ENCODE measurements at regions of chr15 and their contacts with region 1.

Region 1: GRCh38 chr15:96170979-96171739 is 159.3 kb upstream of the NR2F2 start:
- DNase-seq: peak; percentile 69
- H3K4me3 Mint-ChIP-seq: no peak overlapping the region
- H3K27ac Mint-ChIP-seq: no peak overlapping the region
- H3K4me1 Mint-ChIP-seq: peaks cover 19% of the 10 kb centered on the region
- H3K27me3 Mint-ChIP-seq: no peaks in the 10 kb centered on the region
- CTCF ChIP-seq: no peak

Region 2: DNA sequence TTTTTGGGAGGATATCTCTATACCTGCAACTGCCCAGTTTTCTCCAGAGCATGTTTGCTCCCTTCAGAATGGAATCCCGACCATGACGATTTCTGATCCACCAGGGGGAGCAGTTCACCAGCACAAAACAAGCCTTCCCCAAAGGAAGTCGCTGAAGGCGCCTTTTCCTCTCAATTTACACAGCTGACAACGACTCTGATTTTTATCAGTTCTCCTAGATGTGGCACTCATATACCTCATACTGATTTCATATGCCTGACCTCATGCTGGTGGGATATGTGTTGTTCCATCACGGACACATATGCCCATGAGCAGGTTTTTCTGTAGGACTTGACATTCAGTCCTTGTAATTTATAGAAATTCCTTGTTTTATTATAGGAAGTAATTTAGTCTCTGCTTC is 911.6 kb before region 1 on chr15:
- CTCF ChIA-PET with region 1: no interaction called
- intact Hi-C with region 1: loop called (anchors 10 kb)
- DNase-seq: peak; percentile 78
- H3K4me3 Mint-ChIP-seq: peak overlapping the region; percentile 15
- H3K27ac Mint-ChIP-seq: no peak overlapping the region
- H3K4me1 Mint-ChIP-seq: peaks cover 26% of the 10 kb centered on the region
- H3K27me3 Mint-ChIP-seq: no peaks in the 10 kb centered on the region
- CTCF ChIP-seq: peak; percentile 85

Region 3: DNA sequence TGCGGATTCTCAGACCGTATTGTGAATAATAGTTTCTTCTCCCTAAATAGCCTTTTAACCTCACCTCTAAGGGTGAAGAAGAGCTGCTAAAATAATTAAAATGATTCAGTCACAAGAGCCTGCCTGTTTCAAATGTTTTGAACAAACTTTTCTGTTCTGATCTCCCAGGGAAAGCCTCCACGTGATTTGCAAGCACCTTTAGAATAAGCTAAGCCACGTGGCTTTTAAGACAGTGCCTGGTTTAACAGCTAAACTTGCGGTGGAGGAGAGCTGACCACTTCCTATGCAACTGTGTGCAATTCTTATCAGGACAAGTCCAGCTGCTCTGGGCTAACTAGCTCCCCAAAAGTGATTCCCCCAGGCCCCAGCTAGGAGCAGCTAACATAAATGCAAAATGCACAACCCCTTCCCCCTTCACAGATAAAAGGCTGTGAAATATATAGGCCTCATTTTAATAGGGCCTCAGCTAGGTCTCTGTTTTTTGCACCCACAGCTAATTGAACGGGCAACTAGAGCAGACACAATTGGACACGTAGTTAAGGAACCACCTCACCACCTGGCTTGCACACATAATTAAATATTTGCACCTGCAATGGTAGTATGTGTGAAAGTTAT is 241.8 kb before region 1 on chr15:
- CTCF ChIA-PET with region 1: no interaction called
- intact Hi-C with region 1: loop called (anchors 10 kb)
- DNase-seq: no peak
- H3K4me3 Mint-ChIP-seq: no peak overlapping the region
- H3K27ac Mint-ChIP-seq: no peak overlapping the region
- H3K4me1 Mint-ChIP-seq: no peaks in the 10 kb centered on the region
- H3K27me3 Mint-ChIP-seq: no peaks in the 10 kb centered on the region
- CTCF ChIP-seq: no peak

Region 4: GRCh38 chr15:96053031-96053780 is 118.0 kb before region 1 on chr15:
- CTCF ChIA-PET with region 1: no interaction called
- intact Hi-C with region 1: loop called (anchors 2 kb)
- DNase-seq: peak; percentile 75
- H3K4me3 Mint-ChIP-seq: peak overlapping the region; percentile 67
- H3K27ac Mint-ChIP-seq: peak overlapping the region; percentile 93
- H3K4me1 Mint-ChIP-seq: peaks cover 25% of the 10 kb centered on the region
- H3K27me3 Mint-ChIP-seq: no peaks in the 10 kb centered on the region
- CTCF ChIP-seq: no peak

Region 5: DNA sequence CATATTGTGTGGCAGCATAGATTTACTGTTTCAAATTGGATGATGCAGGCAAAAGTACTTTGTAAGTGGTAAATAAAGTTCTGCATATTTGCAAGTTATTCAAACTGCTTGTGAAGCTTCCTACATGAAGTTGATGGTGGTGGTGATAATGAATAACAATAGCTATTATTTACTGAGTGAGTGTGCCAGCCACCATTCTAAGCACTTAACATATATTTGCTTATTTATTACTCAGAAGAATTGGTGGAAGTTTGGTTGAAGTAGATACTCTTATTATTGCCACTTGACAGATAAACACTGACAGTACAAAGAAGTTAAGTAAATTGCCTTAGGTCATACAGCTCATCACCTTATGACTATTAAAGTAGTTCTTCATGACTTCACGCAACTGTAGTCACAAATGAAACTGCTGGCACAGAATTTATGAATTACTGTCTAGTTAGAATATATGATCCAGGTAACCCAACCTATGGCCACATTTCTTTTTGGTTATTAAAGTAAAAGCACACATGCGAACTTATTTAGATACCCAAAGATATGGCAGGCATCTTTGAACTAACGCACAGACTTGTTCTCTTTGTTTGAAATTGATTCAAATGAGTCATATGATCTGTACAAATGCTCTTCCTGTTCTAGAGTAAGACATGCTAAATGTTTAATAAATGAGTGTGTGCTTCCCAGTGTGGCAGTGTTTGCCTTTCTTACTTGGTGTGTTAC is 59.5 kb after region 1 on chr15:
- CTCF ChIA-PET with region 1: interaction called, 4 read pairs
- intact Hi-C with region 1: loop called (anchors 1 kb)
- DNase-seq: no peak
- H3K4me3 Mint-ChIP-seq: no peak overlapping the region
- H3K27ac Mint-ChIP-seq: peak overlapping the region; percentile 84
- H3K4me1 Mint-ChIP-seq: peaks cover 65% of the 10 kb centered on the region
- H3K27me3 Mint-ChIP-seq: no peaks in the 10 kb centered on the region
- CTCF ChIP-seq: no peak

Region 6: GRCh38 chr15:96321639-96322535 is 150.7 kb after region 1 on chr15:
- CTCF ChIA-PET with region 1: interaction called, 7 read pairs
- intact Hi-C with region 1: loop called (anchors 2 kb)
- DNase-seq: peak; percentile 63
- H3K4me3 Mint-ChIP-seq: no peak overlapping the region
- H3K27ac Mint-ChIP-seq: peak overlapping the region; percentile 98
- H3K4me1 Mint-ChIP-seq: peaks cover 38% of the 10 kb centered on the region
- H3K27me3 Mint-ChIP-seq: no peaks in the 10 kb centered on the region
- CTCF ChIP-seq: no peak

Measured in Calu3 (cell line).